ENCODE measurements at regions of chr3 and their contacts with region 1.

Region 1: GRCh38 chr3:149657926-149658733 is at the start of gene WWTR1:
- DNase-seq: peak; percentile 88 to 93
- ATAC-seq: peak; percentile 86 to 88
- H3K4me3 ChIP-seq: peak within 1 kb of the TSS; percentile 75 to 93 (median 86)
- H3K27ac ChIP-seq: peak within 1 kb of the TSS; percentile 93 to 96 (median 96)
- H3K4me1 ChIP-seq: peaks cover 36 to 38% of the 10 kb centered on the region in 2 donors
- H3K27me3 ChIP-seq: no peaks in the 10 kb centered on the region
- CTCF ChIP-seq: peak in 2 of 5 experiments; percentile 19 to 23
- POLR2A ChIP-seq: peak; percentile 87 to 97
- total RNA-seq, gene WWTR1: 11.3 to 30.7 (median 17.6) TPM

Region 2: GRCh38 chr3:149243540-149243939 is 414.6 kb before region 1 on chr3:
- in situ Hi-C with region 1: no loop called
- intact Hi-C with region 1: no loop called
- DNase-seq: no peak
- ATAC-seq: no peak
- H3K4me3 ChIP-seq: no peak overlapping the region
- H3K27ac ChIP-seq: no peak overlapping the region
- H3K4me1 ChIP-seq: peaks cover 4 to 12% of the 10 kb centered on the region in 2 donors
- H3K27me3 ChIP-seq: no peaks in the 10 kb centered on the region
- CTCF ChIP-seq: no peak
- POLR2A ChIP-seq: no peak

Region 3: DNA sequence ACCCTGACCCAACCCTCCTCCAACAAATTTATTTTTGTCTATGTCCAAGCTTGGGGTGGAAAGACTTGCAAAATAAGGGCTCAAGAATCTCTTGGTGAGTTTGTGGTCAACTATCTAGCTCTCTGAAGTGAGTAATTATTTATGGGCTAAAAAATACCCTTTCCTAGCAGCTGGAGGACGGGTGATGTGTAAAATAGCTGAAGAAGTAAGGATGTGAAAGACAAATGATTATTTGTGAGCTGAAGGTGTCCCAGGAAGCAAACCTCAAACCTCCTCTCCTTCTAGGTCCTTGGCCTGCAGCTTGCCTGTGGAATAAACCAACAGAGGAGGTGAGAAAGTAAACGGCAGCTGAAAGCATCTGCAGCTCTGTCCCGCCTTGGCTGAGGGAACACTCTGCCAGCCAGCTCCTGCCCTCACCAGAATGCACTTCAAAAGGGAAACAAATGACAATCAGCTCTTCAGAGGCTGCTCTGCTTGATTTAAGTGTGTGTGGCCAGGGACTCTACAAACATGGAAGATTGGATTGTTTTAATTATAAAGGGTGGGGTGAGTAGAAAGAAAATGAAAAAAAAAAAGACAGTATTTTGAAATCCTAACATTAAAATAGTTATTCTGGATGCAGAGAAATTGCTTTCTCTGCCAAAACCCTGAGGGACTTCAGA is 123.3 kb before region 1 on chr3:
- in situ Hi-C with region 1: no loop called
- intact Hi-C with region 1: loop called (anchors 5 kb)
- DNase-seq: no peak
- ATAC-seq: no peak
- H3K4me3 ChIP-seq: no peak overlapping the region
- H3K27ac ChIP-seq: peak overlapping the region in 1 of 4 donors; percentile 7
- H3K4me1 ChIP-seq: peaks cover 22 to 25% of the 10 kb centered on the region in 2 donors
- H3K27me3 ChIP-seq: no peaks in the 10 kb centered on the region
- CTCF ChIP-seq: no peak
- POLR2A ChIP-seq: no peak

Region 4: GRCh38 chr3:149596136-149596770 is 61.9 kb before region 1 on chr3:
- in situ Hi-C with region 1: loop called in 1 of 4 experiments (anchors 10 kb)
- intact Hi-C with region 1: loop called (anchors 1 kb)
- DNase-seq: no peak
- ATAC-seq: no peak
- H3K4me3 ChIP-seq: no peak overlapping the region
- H3K27ac ChIP-seq: peak overlapping the region in 1 of 4 donors; percentile 10
- H3K4me1 ChIP-seq: peaks cover 27 to 28% of the 10 kb centered on the region in 2 donors
- H3K27me3 ChIP-seq: no peaks in the 10 kb centered on the region
- CTCF ChIP-seq: no peak
- POLR2A ChIP-seq: no peak

Region 5: GRCh38 chr3:149702691-149703441 is 44.7 kb after region 1 on chr3:
- in situ Hi-C with region 1: no loop called
- intact Hi-C with region 1: loop called (anchors 5 kb)
- DNase-seq: no peak
- ATAC-seq: peak in 1 of 2 donors; percentile 54
- H3K4me3 ChIP-seq: no peak overlapping the region
- H3K27ac ChIP-seq: peak overlapping the region in 2 of 4 donors; percentile 5 to 47
- H3K4me1 ChIP-seq: no peaks in the 10 kb centered on the region
- H3K27me3 ChIP-seq: no peaks in the 10 kb centered on the region
- CTCF ChIP-seq: no peak
- POLR2A ChIP-seq: no peak

Region 6: GRCh38 chr3:149726716-149727407 is 68.7 kb after region 1 on chr3:
- in situ Hi-C with region 1: no loop called
- intact Hi-C with region 1: no loop called
- DNase-seq: no peak
- ATAC-seq: no peak
- H3K4me3 ChIP-seq: no peak overlapping the region
- H3K27ac ChIP-seq: no peak overlapping the region
- H3K4me1 ChIP-seq: no peaks in the 10 kb centered on the region
- H3K27me3 ChIP-seq: no peaks in the 10 kb centered on the region
- CTCF ChIP-seq: no peak
- POLR2A ChIP-seq: no peak

Region 7: DNA sequence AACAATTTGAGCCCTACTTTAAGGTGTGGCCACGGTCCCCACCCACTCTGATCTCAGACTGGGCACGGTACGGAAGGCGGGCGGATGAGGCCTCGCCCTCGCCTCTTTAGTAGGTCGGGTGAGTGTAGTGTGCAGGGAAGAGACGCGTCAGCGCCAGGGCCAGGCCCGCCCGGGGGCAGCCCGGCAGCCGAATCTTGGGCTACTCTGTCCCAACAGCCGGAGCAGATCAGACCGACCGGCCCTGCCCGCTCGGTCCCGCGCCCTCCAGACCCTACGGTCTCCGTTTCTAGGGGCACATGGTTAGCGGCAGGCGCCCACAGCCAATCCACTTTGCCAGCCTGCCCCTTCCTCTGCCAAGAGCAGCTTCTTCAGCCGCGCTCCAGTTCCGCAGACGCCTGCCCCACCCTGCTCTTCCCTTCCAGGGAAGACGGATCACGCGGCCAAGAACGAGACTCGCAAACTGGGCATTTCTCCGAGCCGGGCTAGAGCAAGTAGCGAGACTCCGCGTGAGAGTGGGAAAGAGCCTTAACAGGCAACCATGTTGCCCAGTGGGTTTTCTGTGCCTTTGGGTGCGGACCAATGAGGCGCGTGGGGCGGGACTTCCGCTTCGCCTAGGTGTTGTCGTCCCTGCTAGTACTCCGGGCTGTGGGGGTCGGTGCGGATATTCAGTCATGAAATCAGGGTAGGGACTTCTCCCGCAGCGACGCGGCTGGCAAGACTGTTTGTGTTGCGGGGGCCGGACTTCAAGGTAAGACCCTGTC is 154.7 kb after region 1 on chr3 and contains the start of gene RNF13:
- in situ Hi-C with region 1: no loop called
- intact Hi-C with region 1: loop called (anchors 5 kb)
- DNase-seq: peak; percentile 98 to 99
- ATAC-seq: peak; percentile 91 to 96
- H3K4me3 ChIP-seq: peak within 1 kb of the TSS; percentile 72 to 90 (median 82)
- H3K27ac ChIP-seq: peak within 1 kb of the TSS; percentile 91 to 98 (median 96)
- H3K4me1 ChIP-seq: peaks cover 41 to 48% of the 10 kb centered on the region in 2 donors
- H3K27me3 ChIP-seq: no peaks in the 10 kb centered on the region
- CTCF ChIP-seq: no peak
- POLR2A ChIP-seq: peak; percentile 75 to 89
- total RNA-seq, gene RNF13: 48.3 to 63.6 (median 56.9) TPM

Measured in gastrocnemius medialis (tissue), 4 donors.